Left ventricle myocardium superior (tissue), 1 donor: ENCODE measurements at regions of chr14 and their contacts with region 1.

Region 1: GRCh38 chr14:69726761-69727511 is 40.0 kb upstream of the SRSF5 start:
- DNase-seq: peak; percentile 91
- ATAC-seq: peak; percentile 97

Region 2: DNA sequence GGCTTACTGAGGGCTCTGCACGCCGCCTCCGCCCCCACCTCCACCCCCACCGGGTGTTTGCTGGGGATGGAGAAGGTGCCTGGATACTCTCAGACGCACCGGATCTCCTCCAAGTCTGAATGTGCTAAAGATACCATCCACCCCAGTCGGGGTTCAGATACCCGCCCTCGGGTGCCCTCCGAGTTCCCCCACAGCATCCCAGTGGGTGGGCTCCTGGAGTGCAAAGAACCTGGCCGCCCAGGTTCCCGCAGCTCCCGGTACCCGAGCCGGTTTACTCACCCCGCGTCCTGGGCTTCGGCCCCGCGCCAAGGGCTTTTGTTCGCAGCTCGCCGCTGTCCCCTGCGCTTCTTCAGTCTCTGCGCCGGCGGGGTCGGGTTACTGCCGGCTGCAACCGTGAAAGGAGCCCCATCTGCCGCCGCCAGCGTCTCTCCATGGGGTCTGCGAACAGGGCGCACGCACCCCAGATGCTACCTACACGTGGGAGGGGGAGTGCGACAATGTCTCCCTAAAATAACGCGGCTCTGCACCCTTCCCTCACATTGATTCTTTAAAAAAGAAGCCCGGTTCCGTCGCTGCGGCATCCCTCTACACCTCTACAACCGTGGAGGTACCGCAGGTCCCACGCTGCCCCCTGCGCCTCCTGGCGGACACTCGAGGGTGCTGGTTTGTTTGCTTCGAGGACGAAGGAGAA is 152.5 kb before region 1 on chr14 and contains the start of gene CCDC177:
- intact Hi-C with region 1: no loop called
- DNase-seq: peak; percentile 67
- ATAC-seq: peak; percentile 53
- total RNA-seq, gene CCDC177: not detected

Region 3: DNA sequence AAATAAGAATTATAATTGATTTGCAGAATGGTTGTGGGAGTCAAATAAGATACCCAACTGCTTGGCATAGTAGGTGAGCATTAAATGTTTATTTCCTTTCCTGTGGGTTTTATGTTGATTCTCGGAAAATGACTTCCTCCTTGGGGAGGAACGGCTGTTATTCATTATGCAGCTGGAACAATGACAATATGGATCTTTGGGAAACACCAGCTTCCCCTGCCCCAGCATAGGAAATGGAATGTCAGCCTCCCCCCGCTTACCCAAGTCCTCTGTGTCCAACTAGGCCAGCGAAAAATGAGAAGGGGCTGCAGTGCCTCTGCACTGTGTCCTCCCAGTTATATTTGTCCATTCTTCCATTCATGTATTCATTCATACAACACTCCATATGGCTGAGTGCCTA is 140.5 kb before region 1 on chr14:
- intact Hi-C with region 1: loop called (anchors 5 kb)
- DNase-seq: no peak
- ATAC-seq: no peak

Region 4: GRCh38 chr14:69643443-69644164 is 83.3 kb before region 1 on chr14:
- intact Hi-C with region 1: no loop called
- DNase-seq: peak; percentile 49
- ATAC-seq: peak; percentile 71